B cell (primary cell): ENCODE measurements at regions of chr12 and their contacts with region 1.

Region 1: GRCh38 chr12:54005853-54006686 is 2.7 kb upstream of the HOXC8 start:
- DNase-seq: peak; percentile 90
- ATAC-seq: peak; percentile 90
- H3K4me3 ChIP-seq: peak overlapping the region in 4 of 5 experiments; percentile 37 to 65 (median 50)
- H3K4me3 Mint-ChIP-seq: peak overlapping the region; percentile 82
- H3K27ac ChIP-seq: no peak overlapping the region
- H3K27ac Mint-ChIP-seq: peak overlapping the region; percentile 0
- H3K4me1 ChIP-seq: peaks cover 25 to 50% of the 10 kb centered on the region in 2 donors
- H3K4me1 Mint-ChIP-seq: peaks cover 27% of the 10 kb centered on the region
- H3K27me3 ChIP-seq: peaks cover 0 to 96% (median 82%) of the 10 kb centered on the region in 4 experiments
- H3K27me3 Mint-ChIP-seq: peaks cover 74% of the 10 kb centered on the region
- CTCF ChIP-seq: peak; percentile 98

Region 2: DNA sequence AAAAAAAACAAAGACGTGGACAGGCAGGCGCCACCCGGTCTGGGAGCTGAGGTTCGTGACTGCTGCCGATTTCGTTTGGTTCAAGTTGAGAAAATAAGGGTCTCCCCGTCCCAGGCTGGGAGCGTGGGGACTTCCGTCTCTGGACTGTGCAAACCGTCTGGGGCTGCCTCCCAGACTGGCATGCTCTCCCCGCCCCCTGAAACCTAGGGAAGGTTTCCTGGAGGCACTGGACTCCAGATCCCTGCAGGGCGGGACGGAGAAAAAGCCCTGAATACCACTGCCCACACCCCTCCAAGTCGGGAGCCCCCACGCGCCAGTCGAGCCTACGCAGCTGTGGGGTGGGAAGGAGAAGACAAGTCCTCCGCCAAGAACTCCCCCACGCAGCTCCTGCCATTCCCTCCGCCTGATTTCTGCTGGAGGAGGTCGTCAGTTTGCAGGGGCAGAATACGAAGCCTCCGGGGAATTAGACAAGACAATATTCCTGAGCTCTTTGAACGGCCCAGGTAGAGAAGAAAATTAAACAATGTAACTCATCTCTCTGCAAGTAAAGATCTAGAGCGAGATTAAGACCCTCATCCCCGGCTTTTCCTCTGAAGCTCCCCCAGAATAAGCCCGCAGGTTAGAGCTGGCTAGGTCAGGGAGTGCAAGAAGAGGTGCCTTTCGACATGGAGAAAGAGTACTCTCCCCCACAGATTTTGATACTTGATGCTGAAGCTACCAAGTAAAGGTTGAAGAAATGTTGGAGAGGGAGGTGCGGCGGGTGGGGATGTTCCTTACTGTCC is 77.8 kb before region 1 on chr12:
- CTCF ChIA-PET with region 1: no interaction called
- POLR2A ChIA-PET with region 1: no interaction called
- intact Hi-C with region 1: no loop called
- DNase-seq: peak; percentile 40
- ATAC-seq: no peak
- H3K4me3 ChIP-seq: no peak overlapping the region
- H3K4me3 Mint-ChIP-seq: no peak overlapping the region
- H3K27ac ChIP-seq: no peak overlapping the region
- H3K27ac Mint-ChIP-seq: no peak overlapping the region
- H3K4me1 ChIP-seq: peaks cover 4 to 15% of the 10 kb centered on the region in 2 donors
- H3K4me1 Mint-ChIP-seq: no peaks in the 10 kb centered on the region
- H3K27me3 ChIP-seq: peaks cover 0 to 92% (median 80%) of the 10 kb centered on the region in 4 experiments
- H3K27me3 Mint-ChIP-seq: peaks cover 78% of the 10 kb centered on the region
- CTCF ChIP-seq: no peak

Region 3: GRCh38 chr12:53974084-53975063 is 31.7 kb before region 1 on chr12 and contains the start of gene HOTAIR:
- CTCF ChIA-PET with region 1: no interaction called
- POLR2A ChIA-PET with region 1: no interaction called
- intact Hi-C with region 1: loop called (anchors 5 kb)
- DNase-seq: peak; percentile 56
- ATAC-seq: peak; percentile 45
- H3K4me3 ChIP-seq: peak within 1 kb of the TSS in 4 of 5 experiments; percentile 18 to 54 (median 40)
- H3K4me3 Mint-ChIP-seq: peak within 1 kb of the TSS; percentile 74
- H3K27ac ChIP-seq: no peak within 1 kb of the TSS
- H3K27ac Mint-ChIP-seq: peak within 1 kb of the TSS; percentile 62
- H3K4me1 ChIP-seq: peaks cover 25 to 41% of the 10 kb centered on the region in 2 donors
- H3K4me1 Mint-ChIP-seq: peaks cover 21% of the 10 kb centered on the region
- H3K27me3 ChIP-seq: peaks cover 0 to 98% (median 85%) of the 10 kb centered on the region in 4 experiments
- H3K27me3 Mint-ChIP-seq: peaks cover 85% of the 10 kb centered on the region
- CTCF ChIP-seq: no peak
- total RNA-seq, gene HOTAIR: not detected in 2 replicates

Region 4: DNA sequence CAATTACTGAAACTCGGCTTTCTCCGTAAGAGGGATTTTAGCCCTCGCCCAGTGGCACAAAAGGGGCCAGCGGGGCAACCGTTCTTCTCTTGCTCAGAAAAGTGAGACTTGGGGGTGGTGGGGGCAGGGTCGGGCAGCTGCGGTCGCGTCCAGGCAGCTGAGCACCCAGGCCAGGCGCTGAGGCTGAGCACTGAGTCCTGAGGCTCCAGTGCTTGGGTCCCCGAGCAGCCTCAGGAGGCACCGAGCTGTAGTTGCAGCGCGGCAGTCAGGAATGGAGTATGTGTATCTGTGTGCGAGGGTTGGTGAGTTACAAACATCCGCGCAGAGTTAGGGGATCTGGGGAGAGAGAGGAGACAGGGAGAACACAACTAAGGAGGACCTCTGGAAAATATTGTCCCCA is 18.1 kb after region 1 on chr12:
- CTCF ChIA-PET with region 1: interaction called, 10 read pairs
- POLR2A ChIA-PET with region 1: no interaction called
- intact Hi-C with region 1: no loop called
- DNase-seq: no peak
- ATAC-seq: no peak
- H3K4me3 ChIP-seq: no peak overlapping the region
- H3K4me3 Mint-ChIP-seq: no peak overlapping the region
- H3K27ac ChIP-seq: no peak overlapping the region
- H3K27ac Mint-ChIP-seq: no peak overlapping the region
- H3K4me1 ChIP-seq: peaks cover 0 to 23% of the 10 kb centered on the region in 2 donors
- H3K4me1 Mint-ChIP-seq: peaks cover 17% of the 10 kb centered on the region
- H3K27me3 ChIP-seq: peaks cover 0 to 92% (median 79%) of the 10 kb centered on the region in 4 experiments
- H3K27me3 Mint-ChIP-seq: peaks cover 71% of the 10 kb centered on the region
- CTCF ChIP-seq: no peak

Region 5: DNA sequence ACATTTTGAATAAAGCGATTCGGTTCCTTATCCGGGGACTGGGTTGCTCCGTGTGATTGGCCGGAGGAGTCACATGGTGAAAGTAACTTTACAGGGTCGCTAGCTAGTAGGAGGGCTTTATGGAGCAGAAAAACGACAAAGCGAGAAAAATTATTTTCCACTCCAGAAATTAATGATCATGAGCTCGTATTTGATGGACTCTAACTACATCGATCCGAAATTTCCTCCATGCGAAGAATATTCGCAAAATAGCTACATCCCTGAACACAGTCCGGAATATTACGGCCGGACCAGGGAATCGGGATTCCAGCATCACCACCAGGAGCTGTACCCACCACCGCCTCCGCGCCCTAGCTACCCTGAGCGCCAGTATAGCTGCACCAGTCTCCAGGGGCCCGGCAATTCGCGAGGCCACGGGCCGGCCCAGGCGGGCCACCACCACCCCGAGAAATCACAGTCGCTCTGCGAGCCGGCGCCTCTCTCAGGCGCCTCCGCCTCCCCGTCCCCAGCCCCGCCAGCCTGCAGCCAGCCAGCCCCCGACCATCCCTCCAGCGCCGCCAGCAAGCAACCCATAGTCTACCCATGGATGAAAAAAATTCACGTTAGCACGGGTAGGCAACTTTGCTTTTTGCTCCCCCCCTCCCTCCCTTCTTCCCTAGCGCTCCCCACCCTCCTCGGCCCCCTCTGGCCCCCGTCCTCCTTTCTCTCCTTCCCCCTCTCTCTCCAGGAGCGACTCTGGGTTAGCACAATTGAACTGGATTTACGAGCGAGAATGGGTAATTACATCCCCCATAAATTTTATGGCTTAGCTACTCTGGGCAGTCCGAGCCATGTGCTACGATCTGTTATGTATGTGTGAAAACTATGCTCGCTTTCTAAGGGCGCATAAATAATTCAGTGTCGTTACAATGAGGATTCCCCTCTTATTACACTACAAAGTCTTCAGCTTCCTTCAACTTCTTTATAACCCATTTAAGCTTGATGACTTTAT is 48.0 kb after region 1 on chr12 and contains the start of gene HOXC4:
- CTCF ChIA-PET with region 1: interaction called, 6 read pairs
- POLR2A ChIA-PET with region 1: interaction called, 6 read pairs
- intact Hi-C with region 1: loop called (anchors 5 kb)
- DNase-seq: peak; percentile 36
- ATAC-seq: peak; percentile 66
- H3K4me3 ChIP-seq: peak within 1 kb of the TSS in 4 of 5 experiments; percentile 69 to 78 (median 75)
- H3K4me3 Mint-ChIP-seq: peak within 1 kb of the TSS; percentile 91
- H3K27ac ChIP-seq: peak within 1 kb of the TSS; percentile 83 to 88
- H3K27ac Mint-ChIP-seq: peak within 1 kb of the TSS; percentile 95
- H3K4me1 ChIP-seq: peaks cover 36 to 42% of the 10 kb centered on the region in 2 donors
- H3K4me1 Mint-ChIP-seq: peaks cover 43% of the 10 kb centered on the region
- H3K27me3 ChIP-seq: peaks cover 0 to 63% (median 39%) of the 10 kb centered on the region in 4 experiments
- H3K27me3 Mint-ChIP-seq: peaks cover 56% of the 10 kb centered on the region
- CTCF ChIP-seq: no peak
- total RNA-seq, gene HOXC4: 6.4 and 6.5 TPM in 2 replicates

Region 6: GRCh38 chr12:54201001-54201794 is 195.1 kb after region 1 on chr12:
- CTCF ChIA-PET with region 1: interaction called, 159 read pairs
- POLR2A ChIA-PET with region 1: no interaction called
- intact Hi-C with region 1: loop called (anchors 1 kb)
- DNase-seq: peak; percentile 79
- ATAC-seq: peak; percentile 91
- H3K4me3 ChIP-seq: no peak overlapping the region
- H3K4me3 Mint-ChIP-seq: no peak overlapping the region
- H3K27ac ChIP-seq: no peak overlapping the region
- H3K27ac Mint-ChIP-seq: no peak overlapping the region
- H3K4me1 ChIP-seq: peaks cover 16% of the 10 kb centered on the region in 2 donors
- H3K4me1 Mint-ChIP-seq: peaks cover 21% of the 10 kb centered on the region
- H3K27me3 ChIP-seq: peaks cover 0 to 71% (median 29%) of the 10 kb centered on the region in 4 experiments
- H3K27me3 Mint-ChIP-seq: peaks cover 62% of the 10 kb centered on the region
- CTCF ChIP-seq: peak; percentile 94

Region 7: GRCh38 chr12:54214553-54215406 is 208.7 kb after region 1 on chr12:
- CTCF ChIA-PET with region 1: interaction called, 159 read pairs
- POLR2A ChIA-PET with region 1: interaction called, 8 read pairs
- intact Hi-C with region 1: no loop called
- DNase-seq: peak; percentile 95
- ATAC-seq: peak; percentile 83
- H3K4me3 ChIP-seq: peak overlapping the region; percentile 3 to 58 (median 46)
- H3K4me3 Mint-ChIP-seq: peak overlapping the region; percentile 90
- H3K27ac ChIP-seq: no peak overlapping the region
- H3K27ac Mint-ChIP-seq: peak overlapping the region; percentile 33
- H3K4me1 ChIP-seq: peaks cover 36 to 46% of the 10 kb centered on the region in 2 donors
- H3K4me1 Mint-ChIP-seq: peaks cover 44% of the 10 kb centered on the region
- H3K27me3 ChIP-seq: peaks cover 0 to 30% (median 6%) of the 10 kb centered on the region in 4 experiments
- H3K27me3 Mint-ChIP-seq: peaks cover 6% of the 10 kb centered on the region
- CTCF ChIP-seq: peak; percentile 100

Region 8: DNA sequence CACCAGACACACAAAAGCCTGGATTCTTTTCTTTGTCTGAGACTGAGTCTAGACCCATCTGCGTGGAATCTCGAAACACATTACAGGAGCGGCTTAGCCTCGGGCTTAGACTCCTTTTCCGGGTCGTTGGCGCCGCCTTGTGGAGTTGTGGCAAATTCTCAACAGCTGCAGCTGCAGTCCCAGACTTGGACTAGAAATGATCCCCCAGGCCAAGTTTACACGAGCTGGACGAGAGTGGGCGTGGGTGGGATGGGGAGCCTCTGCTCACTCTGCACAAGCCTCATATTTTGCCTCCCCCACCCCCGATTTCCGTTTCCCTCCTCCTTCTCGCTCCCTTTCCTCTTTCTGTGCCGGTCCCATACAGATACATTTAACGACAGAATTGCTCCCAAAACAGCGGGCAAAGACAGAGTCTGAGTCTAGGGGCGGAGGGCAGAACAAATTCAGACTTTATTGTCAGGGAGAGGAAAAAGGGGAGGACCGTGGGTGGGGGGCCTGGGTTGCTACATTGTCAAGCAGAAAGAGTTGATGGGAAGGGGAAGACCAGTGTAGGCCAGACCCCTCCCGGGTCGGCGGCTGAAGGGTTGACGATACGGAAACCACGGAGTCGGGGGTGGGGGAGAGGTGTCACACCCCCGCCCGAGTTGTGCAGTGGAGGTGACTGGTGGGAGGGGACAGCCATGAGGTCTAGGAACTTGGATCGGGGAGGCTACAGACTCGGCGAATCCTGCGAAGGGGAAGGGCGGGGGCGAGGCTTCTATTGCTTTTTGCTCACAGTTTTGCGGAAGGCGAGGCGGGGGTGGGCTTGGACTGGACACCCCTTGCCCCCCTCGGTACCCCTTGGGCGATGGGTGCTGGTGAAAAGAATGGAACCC is 362.9 kb after region 1 on chr12:
- CTCF ChIA-PET with region 1: no interaction called
- POLR2A ChIA-PET with region 1: no interaction called
- intact Hi-C with region 1: loop called (anchors 10 kb)
- DNase-seq: peak; percentile 88
- ATAC-seq: peak; percentile 94
- H3K4me3 ChIP-seq: peak overlapping the region in 2 of 5 experiments; percentile 35 to 38
- H3K4me3 Mint-ChIP-seq: peak overlapping the region; percentile 69
- H3K27ac ChIP-seq: no peak overlapping the region
- H3K27ac Mint-ChIP-seq: peak overlapping the region; percentile 68
- H3K4me1 ChIP-seq: peaks cover 10 to 25% of the 10 kb centered on the region in 2 donors
- H3K4me1 Mint-ChIP-seq: peaks cover 21% of the 10 kb centered on the region
- H3K27me3 ChIP-seq: no peaks in the 10 kb centered on the region
- H3K27me3 Mint-ChIP-seq: no peaks in the 10 kb centered on the region
- CTCF ChIP-seq: peak; percentile 81